H1 (cell line): ENCODE measurements at regions of chr15 and their contacts with region 1.

Region 1: GRCh38 chr15:40928821-40929659 is at the start of gene DLL4:
- DNase-seq: peak in 1 of 2 experiments; percentile 87
- H3K4me3 ChIP-seq: peak within 1 kb of the TSS; percentile 31 to 71 (median 46)
- H3K27ac ChIP-seq: no peak within 1 kb of the TSS
- H3K4me1 ChIP-seq: peaks cover 3 to 36% (median 21%) of the 10 kb centered on the region in 4 experiments
- H3K27me3 ChIP-seq: peaks cover 69 to 94% (median 90%) of the 10 kb centered on the region in 4 experiments
- CTCF ChIP-seq: no peak
- EP300 ChIP-seq: no peak
- POLR2A ChIP-seq: peak in 1 of 2 experiments; percentile 69; a peak in 2 of 3 replicates
- RAD21 ChIP-seq: no peak
- total RNA-seq, gene DLL4: 0.48 and 0.60 TPM in 2 replicates

Region 2: DNA sequence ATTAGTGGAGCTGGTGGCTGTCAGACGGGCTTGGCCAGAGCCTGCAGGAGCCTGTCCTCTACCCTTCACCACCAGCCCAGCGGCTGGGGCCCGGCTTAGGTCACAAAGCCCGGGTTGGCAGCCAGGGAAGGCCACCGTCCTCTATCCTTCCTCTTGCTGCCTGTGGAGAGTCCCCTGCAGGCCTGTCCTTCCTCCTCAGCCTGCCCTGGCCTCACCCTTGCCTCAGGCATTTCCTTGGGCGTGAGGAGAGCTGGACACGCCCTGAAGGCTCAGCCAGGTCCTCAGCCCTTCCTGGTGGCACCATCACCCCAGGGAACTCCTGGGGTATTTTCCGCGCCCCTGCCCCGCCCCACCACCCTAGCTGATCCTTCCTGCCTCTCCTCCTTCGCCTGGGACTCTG is 31.9 kb after region 1 on chr15:
- CTCF ChIA-PET with region 1: interaction called, 26 read pairs
- POLR2A ChIA-PET with region 1: interaction called, 1,505 read pairs
- DNase-seq: no peak
- H3K4me3 ChIP-seq: no peak overlapping the region
- H3K27ac ChIP-seq: no peak overlapping the region
- H3K4me1 ChIP-seq: no peaks in the 10 kb centered on the region; a peak in 5 of 7 replicates
- H3K27me3 ChIP-seq: no peaks in the 10 kb centered on the region
- CTCF ChIP-seq: no peak
- EP300 ChIP-seq: no peak
- POLR2A ChIP-seq: no peak
- RAD21 ChIP-seq: no peak

Region 3: DNA sequence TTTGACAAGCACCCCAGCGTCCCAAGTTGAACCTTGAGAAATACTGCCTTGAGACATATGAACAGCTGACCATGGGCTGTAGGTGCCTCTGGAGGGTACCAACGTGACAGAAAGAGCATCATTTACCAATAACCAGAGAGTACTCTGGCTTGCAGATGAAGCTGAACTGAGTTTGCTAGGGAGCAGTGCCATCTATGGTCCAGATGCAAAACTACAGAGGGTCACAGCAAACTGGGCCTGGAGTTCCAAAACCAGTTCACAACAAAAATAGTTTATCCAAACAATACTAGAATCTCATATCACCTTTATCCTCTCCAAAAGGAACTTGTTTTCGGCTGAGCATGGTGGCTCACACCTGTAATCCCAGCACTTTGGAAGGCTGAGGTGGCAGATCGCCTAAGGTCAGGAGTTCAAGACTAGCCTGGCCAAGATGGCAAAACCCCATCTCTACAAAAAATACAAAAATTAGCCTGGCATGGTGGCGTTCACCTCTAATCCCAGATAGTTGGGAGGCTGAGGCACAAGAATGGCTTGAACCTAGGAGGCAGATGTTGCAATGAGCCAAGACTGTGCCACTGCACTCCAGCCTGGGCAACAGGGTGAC is 93.5 kb after region 1 on chr15:
- CTCF ChIA-PET with region 1: interaction called, 22 read pairs
- POLR2A ChIA-PET with region 1: interaction called, 3 read pairs
- DNase-seq: peak in 1 of 2 experiments; percentile 58
- H3K4me3 ChIP-seq: no peak overlapping the region
- H3K27ac ChIP-seq: no peak overlapping the region
- H3K4me1 ChIP-seq: no peaks in the 10 kb centered on the region
- H3K27me3 ChIP-seq: no peaks in the 10 kb centered on the region
- CTCF ChIP-seq: peak; percentile 54 to 82 (median 82)
- EP300 ChIP-seq: no peak
- POLR2A ChIP-seq: no peak
- RAD21 ChIP-seq: peak; percentile 88

Region 4: GRCh38 chr15:41061667-41062066 is 132.6 kb after region 1 on chr15:
- CTCF ChIA-PET with region 1: no interaction called
- POLR2A ChIA-PET with region 1: no interaction called
- DNase-seq: no peak
- H3K4me3 ChIP-seq: no peak overlapping the region
- H3K27ac ChIP-seq: no peak overlapping the region
- H3K4me1 ChIP-seq: no peaks in the 10 kb centered on the region
- H3K27me3 ChIP-seq: no peaks in the 10 kb centered on the region
- CTCF ChIP-seq: no peak
- EP300 ChIP-seq: no peak
- POLR2A ChIP-seq: no peak
- RAD21 ChIP-seq: no peak

Region 5: DNA sequence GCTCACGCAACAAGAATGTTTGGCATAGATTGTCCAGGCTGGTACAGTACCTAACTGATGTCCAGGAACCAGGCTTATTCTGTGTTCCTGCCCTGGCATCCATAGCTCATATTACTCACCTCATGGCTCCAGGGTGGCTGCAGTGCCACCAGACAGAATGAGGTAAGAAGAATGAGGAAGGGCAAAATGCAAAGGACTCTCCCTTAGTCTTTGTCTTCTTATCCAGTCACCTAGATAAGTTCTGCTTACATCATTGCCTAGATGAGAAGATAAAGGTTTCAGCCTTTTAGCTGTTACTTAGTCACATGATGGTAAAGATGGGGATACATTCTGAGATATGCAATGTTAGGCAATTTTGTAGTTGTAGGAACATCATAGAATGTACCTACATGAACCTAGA is 347.8 kb after region 1 on chr15:
- CTCF ChIA-PET with region 1: no interaction called
- POLR2A ChIA-PET with region 1: no interaction called
- DNase-seq: no peak
- H3K4me3 ChIP-seq: no peak overlapping the region
- H3K27ac ChIP-seq: no peak overlapping the region
- H3K4me1 ChIP-seq: no peaks in the 10 kb centered on the region
- H3K27me3 ChIP-seq: no peaks in the 10 kb centered on the region
- CTCF ChIP-seq: no peak
- EP300 ChIP-seq: no peak
- POLR2A ChIP-seq: no peak
- RAD21 ChIP-seq: no peak